ENCODE measurements at regions of chr3 and their contacts with region 1.

Region 1: DNA sequence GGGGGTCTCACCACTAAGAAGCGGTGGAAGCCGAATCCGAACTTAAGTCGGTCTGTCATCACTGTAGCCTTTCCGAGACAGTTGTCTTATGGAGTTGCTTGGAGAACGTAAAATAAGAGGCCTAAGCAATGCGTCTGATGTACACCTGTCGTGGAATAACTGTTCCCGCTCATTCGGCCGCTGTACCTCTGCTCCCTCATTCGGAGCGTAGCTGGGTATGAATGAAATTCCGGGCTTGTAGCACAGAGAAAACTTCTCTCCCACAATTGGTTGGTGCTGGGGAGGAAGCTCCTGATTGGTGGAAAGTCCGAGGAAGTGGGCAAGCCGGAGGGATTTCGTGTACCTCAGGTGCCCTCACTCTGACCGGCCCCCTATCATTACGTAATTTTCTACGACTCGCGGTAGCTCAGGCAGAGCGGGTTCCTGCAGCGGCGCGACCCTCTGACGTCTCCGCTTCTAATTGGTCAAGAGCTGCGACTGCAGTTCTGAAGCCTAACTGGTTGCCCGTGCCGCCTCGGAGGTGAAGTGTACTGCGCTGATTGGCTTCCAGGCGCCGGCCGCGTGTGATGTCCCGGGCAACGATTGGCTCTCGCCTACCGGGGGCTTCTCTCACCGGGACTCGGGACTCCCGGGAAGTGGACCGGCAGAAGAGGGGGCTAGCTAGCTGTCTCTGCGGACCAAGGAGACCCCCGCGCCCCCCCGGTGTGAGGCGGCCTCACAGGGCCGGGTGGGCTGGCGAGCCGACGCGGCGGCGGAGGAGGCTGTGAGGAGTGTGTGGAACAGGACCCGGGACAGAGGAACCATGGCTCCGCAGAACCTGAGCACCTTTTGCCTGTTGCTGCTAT is at the start of gene DNAJB11:
- DNase-seq: peak; percentile 100
- H3K4me3 Mint-ChIP-seq: peak within 1 kb of the TSS; percentile 90
- H3K27ac Mint-ChIP-seq: peak within 1 kb of the TSS; percentile 93
- H3K4me1 Mint-ChIP-seq: peaks cover 37% of the 10 kb centered on the region
- H3K27me3 Mint-ChIP-seq: no peaks in the 10 kb centered on the region
- CTCF ChIP-seq: no peak
- total RNA-seq, gene DNAJB11: 171 and 181 TPM in 2 replicates

Region 2: DNA sequence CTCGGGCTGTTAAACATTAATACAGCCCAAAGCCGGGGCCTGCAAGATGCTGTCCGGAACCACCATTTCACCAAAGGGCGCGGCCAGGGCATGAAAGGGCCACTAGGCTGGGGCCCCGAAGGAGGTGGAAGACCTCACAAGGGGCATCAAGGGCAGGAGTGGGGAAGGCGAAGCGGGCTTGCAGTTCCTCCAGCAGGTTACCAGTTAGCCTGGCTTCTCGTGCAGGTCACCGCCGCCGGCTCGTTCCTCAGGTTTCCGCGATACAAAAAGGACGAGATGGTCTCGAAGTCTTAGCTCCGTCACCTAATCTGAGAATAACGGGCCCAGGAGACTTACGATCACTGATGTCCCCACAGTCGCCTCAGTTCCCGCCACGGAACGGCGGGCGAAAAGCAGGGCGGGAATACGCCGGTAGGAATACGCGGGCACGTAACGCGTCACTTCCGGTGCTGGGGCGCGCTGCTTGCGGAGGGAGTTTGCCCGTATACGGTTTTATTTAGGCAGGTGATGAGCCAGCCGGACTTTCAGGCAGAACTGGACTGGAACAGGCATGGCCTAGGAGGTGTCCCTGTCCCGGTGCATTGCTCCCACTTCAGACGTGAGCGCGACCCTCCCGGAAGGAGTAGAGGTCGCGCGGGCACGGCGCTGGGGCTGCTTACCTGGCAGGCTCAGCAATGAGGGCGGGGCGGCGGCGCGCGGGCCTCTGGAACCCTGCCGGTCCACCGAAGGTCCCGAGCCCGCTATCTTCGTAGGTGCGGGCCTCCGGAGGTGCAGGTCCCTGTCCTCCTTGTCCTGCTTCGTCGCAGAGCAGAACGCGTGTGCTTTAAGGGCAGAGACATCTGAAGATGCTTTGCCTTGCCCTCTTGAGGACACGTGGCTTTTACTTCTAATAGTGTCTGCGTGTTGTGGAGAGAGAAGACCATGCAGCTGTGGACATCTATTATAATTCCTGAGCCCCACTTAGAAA is 236.1 kb after region 1 on chr3 and contains the start of gene RFC4:
- CTCF ChIA-PET with region 1: no interaction called
- intact Hi-C with region 1: loop called (anchors 1 kb)
- DNase-seq: peak; percentile 95
- H3K4me3 Mint-ChIP-seq: peak within 1 kb of the TSS; percentile 95
- H3K27ac Mint-ChIP-seq: peak within 1 kb of the TSS; percentile 90
- H3K4me1 Mint-ChIP-seq: peaks cover 19% of the 10 kb centered on the region
- H3K27me3 Mint-ChIP-seq: no peaks in the 10 kb centered on the region
- CTCF ChIP-seq: peak; percentile 29
- total RNA-seq, gene RFC4: 94.8 and 107 TPM in 2 replicates